SK-N-SH (cell line): ENCODE measurements at regions of chrX and their contacts with region 1.

Region 1: GRCh38 chrX:111823128-111823527 is 52.9 kb upstream of the TRPC5OS start:
- DNase-seq: peak; percentile 40
- H3K4me3 ChIP-seq: no peak overlapping the region; a peak in 1 of 4 replicates
- H3K27ac ChIP-seq: no peak overlapping the region
- H3K4me1 ChIP-seq: no peaks in the 10 kb centered on the region
- H3K27me3 ChIP-seq: peaks cover under 1% of the 10 kb centered on the region; the same call in 1 of the 2 replicates
- CTCF ChIP-seq: peak; percentile 59
- EP300 ChIP-seq: no peak
- RAD21 ChIP-seq: peak; percentile 59

Region 2: DNA sequence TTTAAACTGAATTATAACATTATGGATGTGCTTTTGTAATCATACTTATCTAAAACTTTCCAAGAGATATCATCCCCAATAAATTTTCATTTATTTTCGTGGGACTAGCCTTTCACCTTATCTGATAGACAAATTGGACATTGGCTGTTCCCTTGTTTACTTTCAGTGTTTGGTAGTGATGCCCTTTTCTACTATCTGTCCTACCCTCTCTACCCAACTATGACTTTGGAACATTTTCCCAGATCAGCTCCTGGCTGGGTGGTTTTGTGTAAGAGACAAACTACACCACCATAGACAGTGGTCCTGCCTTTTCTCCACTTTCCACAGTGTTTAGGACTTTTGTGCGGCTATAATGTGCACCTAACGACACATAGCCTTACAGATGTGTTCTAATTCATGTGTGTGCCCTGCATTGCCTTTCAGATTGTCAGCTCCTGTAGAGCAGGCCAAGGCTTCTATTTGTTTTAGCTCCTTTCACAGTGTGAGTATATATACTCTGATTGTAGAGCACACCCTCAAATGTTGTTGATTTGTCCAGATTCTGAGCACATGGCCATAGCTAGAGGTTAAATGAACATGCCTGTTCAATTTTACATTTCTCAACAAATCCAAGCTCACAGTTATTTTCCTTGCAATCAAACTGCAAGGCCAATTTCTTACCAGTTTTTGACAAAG is 10.1 kb before region 1 on chrX:
- CTCF ChIA-PET with region 1: interaction called, 14 read pairs
- POLR2A ChIA-PET with region 1: no interaction called
- DNase-seq: no peak
- H3K4me3 ChIP-seq: no peak overlapping the region
- H3K27ac ChIP-seq: no peak overlapping the region
- H3K4me1 ChIP-seq: no peaks in the 10 kb centered on the region
- H3K27me3 ChIP-seq: no peaks in the 10 kb centered on the region; the same call in 1 of the 2 replicates
- CTCF ChIP-seq: no peak
- EP300 ChIP-seq: no peak
- RAD21 ChIP-seq: no peak

Region 3: GRCh38 chrX:111837197-111837596 is 14.1 kb after region 1 on chrX:
- CTCF ChIA-PET with region 1: interaction called, 16 read pairs
- POLR2A ChIA-PET with region 1: no interaction called
- DNase-seq: no peak
- H3K4me3 ChIP-seq: no peak overlapping the region
- H3K27ac ChIP-seq: no peak overlapping the region
- H3K4me1 ChIP-seq: no peaks in the 10 kb centered on the region; a peak in 1 of 4 replicates
- H3K27me3 ChIP-seq: peaks cover 7% of the 10 kb centered on the region; the same call in 1 of the 2 replicates
- CTCF ChIP-seq: no peak
- EP300 ChIP-seq: no peak
- RAD21 ChIP-seq: no peak